WTC11 (cell line): ENCODE measurements at regions of chr16 and their contacts with region 1.

Region 1: GRCh38 chr16:2023098-2023925 is 3.4 kb upstream of the NHERF2 start:
- DNase-seq: peak; percentile 98
- ATAC-seq: peak; percentile 57
- H3K4me3 Mint-ChIP-seq: peak overlapping the region; percentile 77
- H3K27ac Mint-ChIP-seq: peak overlapping the region; percentile 95; the same call in 1 of the 2 replicates
- H3K4me1 Mint-ChIP-seq: peaks cover 14% of the 10 kb centered on the region
- H3K27me3 Mint-ChIP-seq: peaks cover 72% of the 10 kb centered on the region
- CTCF ChIP-seq: peak; percentile 98

Region 2: GRCh38 chr16:2039274-2040031 is 16.1 kb after region 1 on chr16:
- CTCF ChIA-PET with region 1: interaction called, 12 read pairs
- POLR2A ChIA-PET with region 1: no interaction called
- DNase-seq: no peak
- ATAC-seq: no peak
- H3K4me3 Mint-ChIP-seq: no peak overlapping the region
- H3K27ac Mint-ChIP-seq: peak overlapping the region; percentile 49
- H3K4me1 Mint-ChIP-seq: no peaks in the 10 kb centered on the region
- H3K27me3 Mint-ChIP-seq: no peaks in the 10 kb centered on the region
- CTCF ChIP-seq: no peak

Region 3: DNA sequence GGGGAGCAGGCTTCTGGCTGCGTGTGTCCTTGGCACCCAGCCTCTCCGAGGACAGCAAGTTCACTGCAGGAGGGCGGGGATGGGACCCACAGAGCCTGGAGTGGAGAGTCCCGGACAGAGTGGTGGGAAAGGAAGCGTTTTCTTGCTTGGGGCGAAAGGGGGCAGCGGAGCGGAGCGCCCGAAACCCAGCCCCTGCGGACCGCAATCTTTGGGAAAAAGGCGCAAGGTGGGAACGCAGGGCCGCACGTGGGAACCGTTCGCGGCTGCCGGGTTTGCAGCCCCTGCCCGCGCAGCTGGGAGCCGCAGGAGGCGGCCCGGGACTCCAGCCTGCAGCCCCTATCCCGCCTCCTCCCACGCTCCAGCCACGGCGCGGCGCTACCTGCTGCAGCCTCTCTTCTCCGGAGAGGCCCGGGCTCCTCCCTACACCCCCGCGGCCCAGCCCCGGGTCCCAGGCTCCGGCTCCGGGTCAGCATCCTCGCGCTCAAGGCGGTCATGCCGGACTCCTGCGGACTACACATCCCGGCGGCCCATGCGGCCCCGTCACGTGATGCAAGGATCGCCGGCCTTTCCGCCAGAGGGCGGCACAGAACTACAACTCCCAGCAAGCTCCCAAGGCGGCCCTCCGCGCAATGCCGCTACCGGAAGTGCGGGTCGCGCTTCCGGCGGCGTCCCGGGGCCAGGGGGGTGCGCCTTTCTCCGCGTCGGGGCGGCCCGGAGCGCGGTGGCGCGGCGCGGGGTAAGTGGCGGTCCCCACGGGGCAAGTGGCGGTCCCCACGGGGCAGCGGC is 24.2 kb after region 1 on chr16 and contains the starts of genes NTHL1 and TSC2:
- CTCF ChIA-PET with region 1: interaction called, 27 read pairs
- POLR2A ChIA-PET with region 1: no interaction called
- DNase-seq: peak; percentile 99
- ATAC-seq: peak; percentile 95
- H3K4me3 Mint-ChIP-seq: peak within 1 kb of the TSS; percentile 91
- H3K27ac Mint-ChIP-seq: peak within 1 kb of the TSS; percentile 54
- H3K4me1 Mint-ChIP-seq: peaks cover 10% of the 10 kb centered on the region
- H3K27me3 Mint-ChIP-seq: no peaks in the 10 kb centered on the region
- CTCF ChIP-seq: no peak
- total RNA-seq, gene NTHL1: 90.5 to 93.4 TPM (median 93.3 TPM) in 3 replicates
- total RNA-seq, gene TSC2: 103 to 134 TPM (median 117 TPM) in 3 replicates

Region 4: DNA sequence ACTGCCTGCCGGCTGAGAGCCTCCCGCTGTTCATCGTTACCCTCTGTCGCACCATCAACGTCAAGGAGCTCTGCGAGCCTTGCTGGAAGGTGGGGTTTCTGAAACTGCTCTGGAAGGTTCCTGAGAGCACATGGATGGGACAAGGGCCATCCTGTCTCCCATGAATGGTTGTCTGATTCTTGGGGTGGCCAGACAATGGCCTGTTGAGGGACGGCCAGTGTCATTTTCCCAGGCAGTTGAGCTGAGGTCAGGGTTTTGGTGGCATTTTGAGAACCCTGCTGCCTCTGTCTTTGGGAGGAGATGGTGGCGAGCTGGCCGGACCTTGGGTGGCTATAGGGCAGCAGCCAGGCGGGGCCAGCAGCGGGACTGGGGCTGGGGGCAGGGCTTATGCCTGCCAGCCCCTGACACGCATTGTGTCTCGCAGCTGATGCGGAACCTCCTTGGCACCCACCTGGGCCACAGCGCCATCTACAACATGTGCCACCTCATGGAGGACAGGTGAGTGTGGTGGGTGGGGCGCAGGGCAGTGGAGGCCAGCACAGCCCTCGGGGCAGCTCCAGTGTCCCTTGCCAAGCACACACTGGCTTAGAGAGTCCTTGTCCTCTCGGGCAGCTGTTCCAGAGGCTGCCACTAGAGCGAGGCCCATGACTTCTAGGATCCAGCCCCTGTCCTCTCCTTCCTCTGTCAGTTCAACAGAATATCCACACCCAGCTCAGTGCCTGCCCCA is 33.5 kb after region 1 on chr16:
- CTCF ChIA-PET with region 1: interaction called, 18 read pairs
- POLR2A ChIA-PET with region 1: no interaction called
- DNase-seq: no peak
- ATAC-seq: peak; percentile 79
- H3K4me3 Mint-ChIP-seq: no peak overlapping the region
- H3K27ac Mint-ChIP-seq: no peak overlapping the region
- H3K4me1 Mint-ChIP-seq: no peaks in the 10 kb centered on the region
- H3K27me3 Mint-ChIP-seq: no peaks in the 10 kb centered on the region
- CTCF ChIP-seq: no peak

Region 5: DNA sequence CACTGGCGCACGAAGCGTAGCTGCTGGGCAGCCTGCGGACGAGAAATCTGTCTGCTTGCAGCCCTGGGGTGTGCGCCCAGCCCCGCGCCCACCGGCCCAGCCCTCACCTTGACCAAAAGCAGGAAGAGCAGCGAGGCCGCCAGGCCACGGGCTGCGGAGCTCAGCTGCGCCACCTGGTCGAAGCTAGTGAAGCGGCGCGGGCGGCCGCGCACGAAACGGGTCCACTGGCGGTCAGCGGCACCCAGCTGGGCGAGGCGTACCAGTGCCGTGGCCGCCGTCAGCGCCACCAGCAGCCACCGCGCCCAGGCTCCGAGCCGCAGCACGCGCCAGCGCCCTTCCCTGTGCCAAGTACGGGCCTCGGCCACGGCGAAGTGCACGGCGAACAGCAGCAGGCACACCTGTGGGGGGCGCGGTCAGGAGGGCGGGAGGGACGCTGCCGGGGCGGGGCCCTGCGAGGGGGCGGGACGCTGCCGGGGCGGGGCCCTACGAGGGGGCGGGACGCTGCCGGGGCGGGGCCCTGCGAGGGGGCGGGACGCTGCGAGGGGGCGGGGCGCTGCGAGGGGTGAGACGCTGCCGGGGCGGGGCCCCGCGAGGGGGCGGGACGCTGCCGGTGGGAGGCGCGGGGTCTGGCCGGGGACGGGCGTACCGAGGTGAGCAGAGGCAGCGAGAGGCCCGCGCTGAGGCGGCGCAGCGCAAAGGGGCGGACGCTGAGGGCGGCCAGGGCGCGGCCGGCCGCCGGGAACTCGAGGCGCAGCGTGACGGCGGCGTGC is 67.7 kb after region 1 on chr16:
- CTCF ChIA-PET with region 1: interaction called, 21 read pairs
- POLR2A ChIA-PET with region 1: interaction called, 5 read pairs
- DNase-seq: peak; percentile 95
- ATAC-seq: peak; percentile 84
- H3K4me3 Mint-ChIP-seq: peak overlapping the region; percentile 55
- H3K27ac Mint-ChIP-seq: no peak overlapping the region
- H3K4me1 Mint-ChIP-seq: no peaks in the 10 kb centered on the region
- H3K27me3 Mint-ChIP-seq: no peaks in the 10 kb centered on the region
- CTCF ChIP-seq: no peak